PC-3 (cell line): ENCODE measurements at regions of chr2 and their contacts with region 1.

Region 1: GRCh38 chr2:163191372-163191771 is 352.8 kb upstream of the KCNH7 start:
- DNase-seq: peak; percentile 61
- ATAC-seq: peak; percentile 40; the same call in 1 of the 2 replicates
- H3K4me3 ChIP-seq: no peak overlapping the region
- H3K27ac ChIP-seq: no peak overlapping the region
- H3K4me1 ChIP-seq: no peaks in the 10 kb centered on the region
- H3K27me3 ChIP-seq: 0 out of 2 replicates have a peak, but pooled peaks cover 3% of the 10 kb centered on the region
- CTCF ChIP-seq: peak; percentile 82

Region 2: GRCh38 chr2:163231666-163232065 is 40.3 kb after region 1 on chr2:
- CTCF ChIA-PET with region 1: no interaction called
- POLR2A ChIA-PET with region 1: no interaction called
- intact Hi-C with region 1: no loop called
- DNase-seq: no peak
- ATAC-seq: no peak
- H3K4me3 ChIP-seq: no peak overlapping the region
- H3K27ac ChIP-seq: no peak overlapping the region
- H3K4me1 ChIP-seq: no peaks in the 10 kb centered on the region
- H3K27me3 ChIP-seq: no peaks in the 10 kb centered on the region
- CTCF ChIP-seq: no peak

Region 3: DNA sequence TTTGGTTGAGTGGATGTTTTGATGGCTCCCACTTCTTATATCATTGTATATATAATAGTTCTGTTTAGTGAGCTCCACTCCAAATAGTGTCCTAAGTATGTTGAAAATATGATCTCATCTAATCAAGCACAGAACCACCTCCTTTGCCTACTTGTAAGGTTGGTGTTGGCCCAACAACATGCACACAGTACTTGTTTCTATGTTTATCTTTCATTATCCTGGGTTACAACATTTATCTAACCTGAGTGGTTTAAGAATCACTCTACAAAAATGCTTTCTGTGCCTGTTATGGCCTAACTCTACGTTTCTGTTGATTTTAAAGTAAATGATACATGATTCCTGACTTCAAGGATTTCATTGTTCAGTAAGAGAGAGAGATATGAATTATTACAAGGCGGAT is 262.5 kb after region 1 on chr2:
- CTCF ChIA-PET with region 1: no interaction called
- POLR2A ChIA-PET with region 1: no interaction called
- intact Hi-C with region 1: loop called (anchors 5 kb)
- DNase-seq: no peak
- ATAC-seq: no peak
- H3K4me3 ChIP-seq: no peak overlapping the region
- H3K27ac ChIP-seq: no peak overlapping the region
- H3K4me1 ChIP-seq: no peaks in the 10 kb centered on the region
- H3K27me3 ChIP-seq: peaks cover 52% of the 10 kb centered on the region
- CTCF ChIP-seq: no peak

Region 4: GRCh38 chr2:164430166-164430783 is 1238.9 kb after region 1 on chr2:
- CTCF ChIA-PET with region 1: no interaction called
- POLR2A ChIA-PET with region 1: no interaction called
- intact Hi-C with region 1: loop called (anchors 1 kb)
- DNase-seq: peak; percentile 64
- ATAC-seq: no peak
- H3K4me3 ChIP-seq: no peak overlapping the region
- H3K27ac ChIP-seq: no peak overlapping the region
- H3K4me1 ChIP-seq: no peaks in the 10 kb centered on the region
- H3K27me3 ChIP-seq: peaks cover 78% of the 10 kb centered on the region
- CTCF ChIP-seq: peak; percentile 83